GM12878 (cell line): ENCODE measurements at regions of chr3 and their contacts with region 1.

Region 1: DNA sequence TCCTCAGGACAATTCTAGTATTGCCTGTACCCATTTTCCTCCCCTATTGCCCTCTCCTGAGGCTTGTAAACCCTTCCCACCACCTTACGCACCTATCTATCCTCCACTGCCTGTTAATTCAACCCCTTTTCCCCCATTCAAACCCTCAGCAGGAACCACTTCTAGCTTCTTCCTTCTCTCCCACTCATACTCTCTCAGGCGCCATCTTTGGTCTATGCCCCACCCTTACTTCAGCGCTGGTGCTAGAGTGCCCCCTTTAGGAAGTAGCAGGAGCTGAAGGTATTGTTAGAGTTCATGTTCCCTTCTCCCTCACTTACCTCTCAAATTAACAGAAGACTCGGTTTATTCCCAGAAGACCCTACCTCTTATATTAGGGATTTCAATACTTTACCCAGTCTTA is 121.8 kb upstream of the NLGN1 start:
- DNase-seq: no peak
- ATAC-seq: peak; percentile 81
- H3K4me3 ChIP-seq: no peak overlapping the region
- H3K27ac ChIP-seq: no peak overlapping the region
- H3K4me1 ChIP-seq: no peaks in the 10 kb centered on the region
- H3K27me3 ChIP-seq: no peaks in the 10 kb centered on the region
- CTCF ChIP-seq: peak in 2 of 3 experiments; percentile 16 to 39; a peak in 3 of 6 replicates
- EP300 ChIP-seq: no peak
- POLR2A ChIP-seq: no peak
- RAD21 ChIP-seq: peak; percentile 52

Region 2: DNA sequence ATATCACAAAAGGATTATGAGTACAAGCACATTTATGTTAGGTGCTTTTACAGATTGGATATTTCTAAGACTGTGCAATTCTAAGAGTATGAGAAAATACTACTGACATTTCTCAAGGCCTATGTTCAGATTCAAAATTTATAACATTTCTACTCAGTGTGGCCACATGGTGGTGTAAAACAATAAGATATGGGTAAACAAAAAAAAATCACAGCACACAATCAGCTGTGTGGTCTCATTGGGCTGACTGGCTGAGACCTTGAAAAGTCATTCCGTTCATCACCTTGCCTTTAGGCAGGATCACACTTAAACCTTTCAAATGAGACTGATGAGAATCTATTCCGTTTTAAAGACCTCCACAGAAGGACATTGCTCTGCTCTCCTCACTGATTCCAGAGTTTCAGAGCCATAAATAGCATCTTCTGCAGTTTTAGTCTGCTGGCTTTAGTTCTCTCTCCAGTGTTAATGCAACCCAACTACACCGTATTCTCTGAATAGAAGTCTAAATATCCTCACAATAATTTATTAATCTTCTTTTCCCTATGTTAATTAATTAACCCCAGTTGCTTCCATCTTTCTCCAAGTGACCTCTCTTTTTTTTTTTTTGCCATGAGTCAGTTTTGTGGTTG is 292.9 kb before region 1 on chr3:
- CTCF ChIA-PET with region 1: no interaction called
- POLR2A ChIA-PET with region 1: no interaction called
- RAD21 ChIA-PET with region 1: no interaction called
- SMC1A ChIA-PET with region 1: no interaction called
- in situ Hi-C with region 1: no loop called
- intact Hi-C with region 1: loop called (anchors 5 kb)
- DNase-seq: no peak
- ATAC-seq: peak; percentile 40; the same call in 2 of the 3 replicates
- H3K4me3 ChIP-seq: no peak overlapping the region
- H3K27ac ChIP-seq: no peak overlapping the region
- H3K4me1 ChIP-seq: no peaks in the 10 kb centered on the region
- H3K27me3 ChIP-seq: no peaks in the 10 kb centered on the region
- CTCF ChIP-seq: no peak; a peak in 1 of 6 replicates
- EP300 ChIP-seq: no peak
- POLR2A ChIP-seq: no peak
- RAD21 ChIP-seq: peak; percentile 35; the same call in 1 of the 2 replicates

Region 3: GRCh38 chr3:173055228-173055933 is 220.4 kb before region 1 on chr3:
- CTCF ChIA-PET with region 1: no interaction called
- POLR2A ChIA-PET with region 1: no interaction called
- RAD21 ChIA-PET with region 1: no interaction called
- SMC1A ChIA-PET with region 1: no interaction called
- in situ Hi-C with region 1: no loop called
- intact Hi-C with region 1: no loop called
- DNase-seq: no peak
- ATAC-seq: peak; percentile 53
- H3K4me3 ChIP-seq: no peak overlapping the region
- H3K27ac ChIP-seq: no peak overlapping the region
- H3K4me1 ChIP-seq: no peaks in the 10 kb centered on the region
- H3K27me3 ChIP-seq: no peaks in the 10 kb centered on the region
- CTCF ChIP-seq: no peak
- EP300 ChIP-seq: no peak
- POLR2A ChIP-seq: no peak
- RAD21 ChIP-seq: no peak

Region 4: GRCh38 chr3:173238091-173238490 is 37.6 kb before region 1 on chr3:
- CTCF ChIA-PET with region 1: no interaction called
- POLR2A ChIA-PET with region 1: no interaction called
- RAD21 ChIA-PET with region 1: no interaction called
- SMC1A ChIA-PET with region 1: no interaction called
- in situ Hi-C with region 1: no loop called
- intact Hi-C with region 1: no loop called
- DNase-seq: no peak
- ATAC-seq: no peak
- H3K4me3 ChIP-seq: no peak overlapping the region
- H3K27ac ChIP-seq: no peak overlapping the region
- H3K4me1 ChIP-seq: no peaks in the 10 kb centered on the region
- H3K27me3 ChIP-seq: no peaks in the 10 kb centered on the region; a peak in 1 of 4 replicates
- CTCF ChIP-seq: no peak
- EP300 ChIP-seq: no peak
- POLR2A ChIP-seq: no peak
- RAD21 ChIP-seq: no peak

Region 5: GRCh38 chr3:173249457-173249856 is 26.3 kb before region 1 on chr3:
- CTCF ChIA-PET with region 1: no interaction called
- POLR2A ChIA-PET with region 1: no interaction called
- RAD21 ChIA-PET with region 1: no interaction called
- SMC1A ChIA-PET with region 1: no interaction called
- in situ Hi-C with region 1: no loop called
- intact Hi-C with region 1: no loop called
- DNase-seq: no peak
- ATAC-seq: peak; percentile 56
- H3K4me3 ChIP-seq: no peak overlapping the region
- H3K27ac ChIP-seq: no peak overlapping the region
- H3K4me1 ChIP-seq: no peaks in the 10 kb centered on the region
- H3K27me3 ChIP-seq: no peaks in the 10 kb centered on the region
- CTCF ChIP-seq: 0 out of 6 replicates have a peak, but pooled peaks of 1 of the 3 experiments have one; percentile 10
- EP300 ChIP-seq: no peak
- POLR2A ChIP-seq: no peak
- RAD21 ChIP-seq: no peak

Region 6: GRCh38 chr3:173287361-173287760 is 11.6 kb after region 1 on chr3:
- CTCF ChIA-PET with region 1: no interaction called
- POLR2A ChIA-PET with region 1: no interaction called
- RAD21 ChIA-PET with region 1: no interaction called
- SMC1A ChIA-PET with region 1: no interaction called
- in situ Hi-C with region 1: no loop called
- intact Hi-C with region 1: no loop called
- DNase-seq: no peak
- ATAC-seq: no peak
- H3K4me3 ChIP-seq: no peak overlapping the region
- H3K27ac ChIP-seq: no peak overlapping the region
- H3K4me1 ChIP-seq: no peaks in the 10 kb centered on the region
- H3K27me3 ChIP-seq: no peaks in the 10 kb centered on the region
- CTCF ChIP-seq: no peak
- EP300 ChIP-seq: no peak
- POLR2A ChIP-seq: no peak
- RAD21 ChIP-seq: no peak